Right lobe of liver (tissue), 6 donors: ENCODE measurements at regions of chr2 and their contacts with region 1.

Region 1: DNA sequence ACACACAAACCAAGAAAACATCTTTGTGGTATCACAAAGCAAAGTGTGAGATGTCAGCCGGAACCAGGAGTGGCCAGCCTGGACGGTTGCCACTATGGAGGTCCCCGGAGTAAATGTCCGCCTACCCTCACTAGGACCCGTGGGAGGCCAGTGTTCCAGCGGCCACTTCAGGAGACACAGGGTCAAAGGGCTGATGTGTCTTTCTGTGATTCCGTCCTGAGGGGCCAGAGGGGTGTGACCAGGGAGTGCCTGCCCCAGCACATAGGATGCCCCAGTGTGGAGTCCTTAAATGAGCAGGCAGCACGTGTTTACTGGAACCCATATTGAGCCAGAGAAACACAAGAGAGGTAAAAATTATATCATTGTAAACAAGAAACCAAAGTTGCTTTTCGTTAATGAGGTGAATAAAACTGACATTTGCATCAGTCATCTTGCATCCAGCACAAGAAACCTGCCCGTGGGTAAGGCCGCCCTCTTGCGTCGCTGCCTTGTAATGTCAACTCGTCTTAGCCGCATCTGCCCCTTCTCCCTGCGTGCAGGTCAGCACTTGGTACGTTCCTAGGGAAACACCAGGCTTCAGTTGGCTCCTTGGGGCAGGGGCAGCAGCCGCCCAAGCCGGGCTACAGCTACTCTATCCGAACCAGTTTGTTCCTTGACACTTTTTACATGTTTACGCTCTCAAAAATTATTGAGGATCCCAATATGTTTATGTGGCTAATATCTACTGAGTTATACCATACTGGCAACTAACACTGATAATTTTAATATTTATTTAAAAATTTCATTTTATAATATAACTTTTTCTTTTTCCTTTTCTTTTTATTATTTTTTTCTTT is 46.7 kb upstream of the LAPTM4A start:
- DNase-seq: peak; percentile 80 to 82 (median 82)
- ATAC-seq: peak; percentile 83 to 86 (median 86)
- H3K4me3 ChIP-seq: no peak overlapping the region
- H3K27ac ChIP-seq: no peak overlapping the region
- H3K4me1 ChIP-seq: peaks cover 0 to 31% (median 9%) of the 10 kb centered on the region in 4 donors
- H3K27me3 ChIP-seq: no peaks in the 10 kb centered on the region
- CTCF ChIP-seq: peak; percentile 83 to 94 (median 90)
- POLR2A ChIP-seq: no peak

Region 2: GRCh38 chr2:19955544-19956422 is 142.3 kb before region 1 on chr2:
- intact Hi-C with region 1: loop called (anchors 5 to 10 kb)
- DNase-seq: peak; percentile 48 to 59 (median 54)
- ATAC-seq: peak; percentile 96 to 100 (median 99)
- H3K4me3 ChIP-seq: no peak overlapping the region
- H3K27ac ChIP-seq: no peak overlapping the region
- H3K4me1 ChIP-seq: no peaks in the 10 kb centered on the region
- H3K27me3 ChIP-seq: no peaks in the 10 kb centered on the region
- CTCF ChIP-seq: peak; percentile 54 to 86 (median 79)
- POLR2A ChIP-seq: no peak

Region 3: DNA sequence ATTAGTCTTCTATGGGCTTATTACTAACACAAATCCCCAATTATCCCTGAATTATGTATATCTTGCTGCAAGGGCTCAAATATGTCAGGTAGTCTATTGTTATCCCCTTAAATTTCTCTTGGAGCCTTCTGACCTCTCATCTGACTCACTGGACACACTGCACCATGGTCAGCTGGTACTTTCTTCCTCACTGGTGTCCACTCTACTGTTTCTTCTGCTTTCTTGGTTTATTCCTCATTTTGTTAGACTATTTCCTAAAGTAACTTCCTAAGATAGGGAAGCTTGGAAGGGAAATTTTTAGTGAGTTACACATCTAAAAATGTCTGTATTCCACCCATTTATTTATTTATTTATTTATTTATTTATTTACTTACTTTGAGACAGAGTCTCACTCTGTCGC is 134.7 kb before region 1 on chr2:
- intact Hi-C with region 1: loop called (anchors 5 to 10 kb)
- DNase-seq: no peak
- ATAC-seq: no peak
- H3K4me3 ChIP-seq: no peak overlapping the region
- H3K27ac ChIP-seq: no peak overlapping the region
- H3K4me1 ChIP-seq: no peaks in the 10 kb centered on the region
- H3K27me3 ChIP-seq: no peaks in the 10 kb centered on the region
- CTCF ChIP-seq: no peak
- POLR2A ChIP-seq: no peak

Region 4: GRCh38 chr2:20012299-20013125 is 85.6 kb before region 1 on chr2 and contains the start of gene MATN3:
- intact Hi-C with region 1: loop called in 1 of 2 experiments (anchors 5 kb)
- DNase-seq: peak in 2 of 3 donors; percentile 46 to 48
- ATAC-seq: peak; percentile 70 to 86 (median 72)
- H3K4me3 ChIP-seq: peak within 1 kb of the TSS; percentile 22 to 51 (median 41)
- H3K27ac ChIP-seq: no peak within 1 kb of the TSS
- H3K4me1 ChIP-seq: peaks cover 0 to 5% (median 0%) of the 10 kb centered on the region in 4 donors
- H3K27me3 ChIP-seq: peaks cover 0 to 8% of the 10 kb centered on the region in 2 donors
- CTCF ChIP-seq: no peak
- POLR2A ChIP-seq: no peak
- total RNA-seq, gene MATN3: not detected

Region 5: GRCh38 chr2:20021405-20022009 is 76.6 kb before region 1 on chr2:
- intact Hi-C with region 1: loop called in 1 of 2 experiments (anchors 5 kb)
- DNase-seq: no peak
- ATAC-seq: no peak
- H3K4me3 ChIP-seq: no peak overlapping the region
- H3K27ac ChIP-seq: no peak overlapping the region
- H3K4me1 ChIP-seq: no peaks in the 10 kb centered on the region
- H3K27me3 ChIP-seq: no peaks in the 10 kb centered on the region
- CTCF ChIP-seq: no peak
- POLR2A ChIP-seq: no peak

Region 6: DNA sequence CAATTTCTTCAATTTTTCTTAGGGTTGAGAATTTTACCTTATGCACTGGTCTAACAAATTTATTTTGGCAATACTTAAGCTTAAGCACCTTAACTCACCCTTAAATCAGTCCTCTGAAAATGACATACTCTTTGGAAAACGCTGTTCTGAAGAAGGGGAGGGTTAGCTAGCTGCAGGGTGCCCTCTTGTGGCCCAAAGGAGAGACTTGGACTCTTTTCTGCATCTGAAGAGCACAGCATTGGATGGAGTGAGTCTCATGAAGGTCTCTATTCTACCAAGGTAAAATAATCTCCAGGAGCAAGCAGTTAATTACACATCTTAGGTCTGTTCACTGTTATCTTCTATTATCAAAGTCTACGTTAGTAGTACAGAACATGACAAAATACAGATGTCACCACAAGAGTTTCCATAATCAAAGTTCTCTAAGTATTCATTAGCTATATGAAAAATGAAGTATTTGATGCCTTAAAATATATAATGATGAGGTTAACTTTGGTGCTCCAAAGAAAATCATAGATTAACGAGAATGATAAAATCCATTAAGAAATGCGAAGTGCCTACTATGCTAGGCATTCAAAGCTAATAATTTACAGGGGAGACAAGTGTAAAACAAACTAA is 228.2 kb after region 1 on chr2:
- intact Hi-C with region 1: no loop called
- DNase-seq: peak in 2 of 3 donors; percentile 44 to 57
- ATAC-seq: peak; percentile 90 to 93 (median 92)
- H3K4me3 ChIP-seq: no peak overlapping the region
- H3K27ac ChIP-seq: no peak overlapping the region
- H3K4me1 ChIP-seq: peaks cover 0 to 22% (median 10%) of the 10 kb centered on the region in 4 donors
- H3K27me3 ChIP-seq: no peaks in the 10 kb centered on the region
- CTCF ChIP-seq: peak; percentile 46 to 85 (median 80)
- POLR2A ChIP-seq: no peak